ENCODE measurements at regions of chr2 and their contacts with region 1.

Region 1: GRCh38 chr2:200811336-200812121 is at the start of gene BZW1:
- DNase-seq: peak; percentile 99
- total RNA-seq, gene BZW1: 211 to 220 TPM

Region 2: DNA sequence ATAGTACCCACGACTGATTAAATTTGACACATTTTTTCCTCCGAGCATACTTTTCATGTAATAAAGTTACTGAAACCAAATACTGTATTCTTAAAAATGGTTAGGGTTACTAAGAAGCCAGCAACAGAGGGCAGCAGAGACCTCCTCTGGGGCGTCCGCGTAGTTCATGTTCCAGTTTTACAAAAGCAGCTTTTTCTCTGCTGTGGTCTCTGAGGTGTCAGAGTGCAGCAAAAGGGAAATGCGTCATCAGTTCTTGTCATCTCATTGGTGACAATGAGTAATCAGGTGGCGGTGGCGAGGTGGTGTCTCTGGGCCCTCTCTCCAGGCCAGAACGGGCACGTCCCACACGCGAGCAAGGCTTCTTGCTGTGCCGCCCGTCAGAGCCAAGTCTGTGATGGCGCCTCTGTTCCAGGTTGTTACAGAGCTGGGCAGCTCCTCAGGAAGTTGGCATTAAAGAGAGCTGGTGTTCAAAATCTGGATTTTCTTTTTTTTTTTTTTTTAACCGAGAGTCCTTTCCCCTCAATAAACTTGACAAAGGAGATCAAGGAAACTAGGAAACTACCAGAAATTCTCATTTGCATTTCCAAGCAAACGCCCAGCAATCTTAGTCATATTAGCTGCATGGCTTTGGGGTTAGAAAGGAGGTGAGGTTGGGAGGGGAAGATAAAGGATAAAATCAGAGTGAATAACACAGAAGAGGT is 98.4 kb before region 1 on chr2:
- intact Hi-C with region 1: loop called in 1 of 2 experiments (anchors 5 kb)
- DNase-seq: peak; percentile 96

Region 3: GRCh38 chr2:200733713-200734198 is 77.8 kb before region 1 on chr2:
- intact Hi-C with region 1: no loop called
- DNase-seq: no peak

Region 4: DNA sequence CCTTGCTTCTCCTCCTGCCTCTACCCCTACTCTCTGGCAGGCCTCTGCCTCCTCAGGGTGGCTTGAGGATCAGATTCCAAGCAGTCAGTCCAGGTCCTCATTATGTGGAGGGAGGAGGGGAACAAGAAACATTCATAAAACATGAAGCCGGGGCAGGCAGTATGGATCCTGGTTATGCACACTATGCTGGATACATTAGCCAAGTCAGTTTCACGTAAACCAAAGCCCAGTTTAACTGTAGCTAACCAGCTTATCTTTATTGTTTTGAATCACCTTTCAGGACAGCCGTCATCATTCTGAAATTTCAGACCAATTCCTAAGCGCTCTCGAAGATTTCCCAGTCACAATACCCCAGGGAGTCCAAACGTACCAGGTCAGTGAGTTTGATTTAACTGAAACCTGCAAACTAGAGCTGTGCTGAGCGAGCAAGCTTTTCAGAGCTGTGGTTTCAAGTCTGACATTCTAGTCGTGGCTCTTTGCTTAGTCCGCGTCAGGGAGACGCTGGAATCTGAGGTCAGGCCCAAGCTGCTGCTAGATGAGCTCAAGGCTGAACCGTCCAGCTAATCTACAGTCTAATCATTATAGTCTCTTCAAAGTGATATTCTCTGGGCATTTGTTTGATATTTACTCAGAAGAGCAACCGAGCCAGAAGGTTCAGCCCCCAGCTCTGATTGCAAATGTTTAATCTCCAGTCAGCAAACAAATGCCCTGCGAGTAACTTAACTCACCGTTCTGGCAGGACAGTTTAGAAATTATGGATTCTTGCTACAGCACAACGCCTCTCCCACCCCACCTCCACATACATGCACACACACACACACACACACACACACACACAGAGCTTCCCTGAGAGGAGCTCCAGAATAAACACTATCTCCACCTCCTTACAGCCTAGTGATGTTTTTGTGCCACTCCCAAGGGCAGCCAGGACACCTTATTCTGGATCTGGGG is 63.6 kb before region 1 on chr2:
- intact Hi-C with region 1: loop called in 1 of 2 experiments (anchors 10 kb)
- DNase-seq: no peak

Region 5: GRCh38 chr2:200864176-200864976 is 52.8 kb after region 1 on chr2 and contains the start of gene CLK1:
- intact Hi-C with region 1: loop called in 1 of 2 experiments (anchors 5 kb)
- DNase-seq: peak; percentile 100
- total RNA-seq, gene CLK1: 91.2 to 127 TPM